Right ventricle myocardium inferior (tissue), 1 donor: ENCODE measurements at regions of chr22 and their contacts with region 1.

Region 1: GRCh38 chr22:39502109-39502788 is at the start of gene MIEF1:
- DNase-seq: peak; percentile 99
- ATAC-seq: peak; percentile 98
- total RNA-seq, gene MIEF1: 17.3 TPM

Region 2: DNA sequence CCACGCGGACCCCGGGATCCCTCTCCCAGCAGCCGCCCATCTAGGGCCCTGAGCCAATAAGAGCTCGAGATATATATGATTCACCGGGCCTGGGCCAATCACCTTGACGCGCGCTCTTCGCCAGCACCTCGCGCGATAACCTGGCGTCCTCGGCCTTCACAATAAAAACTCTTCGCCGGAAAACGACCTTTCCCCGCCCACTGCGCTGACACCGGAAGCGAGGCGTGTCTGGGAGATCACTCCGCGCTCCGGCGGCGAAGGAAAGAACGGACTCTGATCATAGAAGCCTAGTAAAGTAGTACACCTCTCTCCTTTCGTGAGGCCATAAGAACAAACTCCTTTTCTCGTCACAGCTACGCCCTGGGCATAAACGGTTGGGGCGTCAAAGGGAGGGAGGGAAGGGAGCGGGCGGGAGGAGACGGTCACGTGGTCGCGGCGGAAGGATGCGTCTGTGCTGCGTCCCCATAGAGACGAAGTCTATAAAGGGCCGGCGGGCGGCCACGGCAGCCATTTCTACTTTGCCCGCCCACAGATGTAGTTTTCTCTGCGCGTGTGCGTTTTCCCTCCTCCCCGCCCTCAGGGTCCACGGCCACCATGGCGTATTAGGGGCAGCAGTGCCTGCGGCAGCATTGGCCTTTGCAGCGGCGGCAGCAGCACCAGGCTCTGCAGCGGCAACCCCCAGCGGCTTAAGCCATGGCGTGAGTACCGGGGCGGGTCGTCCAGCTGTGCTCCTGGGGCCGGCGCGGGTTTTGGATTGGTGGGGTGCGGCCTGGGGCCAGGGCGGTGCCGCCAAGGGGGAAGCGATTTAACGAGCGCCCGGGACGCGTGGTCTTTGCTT is 18.0 kb after region 1 on chr22 and contains the start of gene ATF4:
- intact Hi-C with region 1: loop called (anchors 2 kb)
- DNase-seq: peak; percentile 99
- ATAC-seq: peak; percentile 88
- total RNA-seq, gene ATF4: 204 TPM

Region 3: DNA sequence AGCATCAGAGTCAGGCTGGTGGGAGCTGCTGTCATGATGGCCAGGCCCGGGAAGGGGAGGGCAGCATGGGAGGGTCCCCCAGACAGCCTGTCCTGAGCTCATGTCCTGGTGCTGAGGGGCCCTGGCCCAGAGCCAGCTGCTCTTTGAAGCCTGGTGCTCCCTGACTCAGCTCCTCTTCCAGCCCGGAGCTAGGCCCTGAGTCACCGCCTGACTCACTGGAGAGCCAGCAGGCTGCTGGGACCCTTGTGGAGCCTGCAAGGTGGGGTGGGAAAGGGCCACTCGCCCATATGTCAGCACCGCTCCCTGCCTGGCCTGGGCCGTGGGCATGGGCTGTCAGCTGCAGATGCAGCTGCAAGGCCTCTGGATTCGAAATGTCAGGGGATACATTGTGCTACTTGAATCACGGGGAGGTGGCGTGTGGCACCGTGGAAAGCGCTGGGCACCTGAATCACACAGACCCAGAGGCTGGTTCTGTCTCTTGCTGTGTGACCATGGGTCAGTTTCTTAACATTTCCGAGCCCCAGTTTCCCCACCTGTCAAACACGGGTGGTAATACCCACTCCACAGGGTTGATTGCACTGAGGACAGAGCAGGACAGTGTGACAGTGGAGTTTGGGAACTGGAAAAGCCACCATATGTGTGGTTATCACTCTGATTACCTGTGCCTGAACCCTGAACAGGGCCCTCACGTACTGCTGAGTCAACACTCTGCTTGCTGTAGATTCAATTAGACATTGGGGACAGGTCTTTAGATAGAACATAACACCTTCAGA is 72.7 kb after region 1 on chr22:
- intact Hi-C with region 1: no loop called
- DNase-seq: no peak
- ATAC-seq: no peak

Region 4: DNA sequence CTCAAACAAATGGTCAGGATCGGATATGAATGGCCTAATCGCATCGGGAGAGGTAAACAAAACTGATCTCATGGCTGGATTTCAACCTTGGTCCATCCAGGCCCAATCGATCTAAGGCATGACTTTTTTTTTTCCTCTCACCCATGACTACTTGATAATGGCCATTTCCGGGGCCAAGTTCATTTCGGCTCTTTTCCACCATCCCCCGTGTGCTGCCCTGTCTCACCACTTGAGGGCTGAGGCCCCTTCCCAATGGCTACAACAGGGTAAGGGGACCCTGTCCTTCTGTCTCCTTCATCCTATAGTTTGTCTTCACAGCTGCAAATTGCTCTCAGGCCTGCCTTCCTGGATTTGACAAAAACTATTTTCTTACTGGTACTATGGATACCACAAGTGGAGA is 425.3 kb after region 1 on chr22:
- intact Hi-C with region 1: no loop called
- DNase-seq: no peak
- ATAC-seq: no peak